Heart right ventricle (tissue), 16 donors: ENCODE measurements at regions of chr20 and their contacts with region 1.

Region 1: DNA sequence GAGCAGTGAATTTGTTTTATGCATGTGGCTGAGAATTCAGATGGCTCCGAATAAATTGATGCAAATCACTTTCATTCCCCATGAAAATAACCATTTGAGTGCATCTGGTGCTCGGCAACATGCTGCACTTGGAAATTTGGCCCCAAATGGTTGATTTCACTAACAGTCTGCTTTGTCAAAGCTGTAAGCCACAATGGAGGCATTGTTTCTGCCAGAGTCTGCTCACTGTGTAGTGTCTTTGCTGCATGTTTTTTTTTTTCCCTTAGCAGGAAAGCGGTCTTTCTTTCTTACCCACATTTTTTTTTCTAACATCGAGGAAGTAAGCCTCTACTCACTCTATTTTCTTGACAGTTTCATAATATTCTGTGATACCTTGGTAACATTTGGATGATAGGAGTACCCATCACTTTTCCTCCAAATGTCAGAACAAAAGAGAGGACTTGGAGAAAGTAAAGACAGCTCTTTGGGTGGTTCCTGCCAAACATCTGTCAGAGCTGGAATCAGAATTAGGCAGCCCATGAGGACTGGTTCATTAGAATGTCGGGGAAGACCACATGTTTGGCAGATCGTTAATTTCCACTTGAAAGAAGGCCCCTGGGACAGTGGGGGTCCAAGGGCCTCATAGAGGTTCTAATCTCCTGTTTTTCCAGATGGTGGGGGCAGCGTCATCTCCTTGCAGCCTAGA is 149.5 kb downstream of the DOK5 start:
- DNase-seq: peak in 1 of 2 donors; percentile 43
- ATAC-seq: peak in 7 of 8 donors; percentile 30 to 83 (median 67)
- H3K4me3 ChIP-seq: no peak overlapping the region
- H3K27ac ChIP-seq: peak overlapping the region in 6 of 10 donors; percentile 3 to 53 (median 17)
- H3K4me1 ChIP-seq: peaks cover 0 to 13% (median 3%) of the 10 kb centered on the region in 9 donors
- H3K27me3 ChIP-seq: no peaks in the 10 kb centered on the region
- CTCF ChIP-seq: no peak

Region 2: GRCh38 chr20:54485631-54486030 is 139.2 kb before region 1 on chr20:
- intact Hi-C with region 1: loop called in 1 of 10 experiments (anchors 10 kb)
- DNase-seq: no peak
- ATAC-seq: no peak
- H3K4me3 ChIP-seq: no peak overlapping the region
- H3K27ac ChIP-seq: no peak overlapping the region
- H3K4me1 ChIP-seq: no peaks in the 10 kb centered on the region
- H3K27me3 ChIP-seq: no peaks in the 10 kb centered on the region
- CTCF ChIP-seq: no peak